Right ventricle myocardium superior (tissue), 1 donor: ENCODE measurements at regions of chr13 and their contacts with region 1.

Region 1: DNA sequence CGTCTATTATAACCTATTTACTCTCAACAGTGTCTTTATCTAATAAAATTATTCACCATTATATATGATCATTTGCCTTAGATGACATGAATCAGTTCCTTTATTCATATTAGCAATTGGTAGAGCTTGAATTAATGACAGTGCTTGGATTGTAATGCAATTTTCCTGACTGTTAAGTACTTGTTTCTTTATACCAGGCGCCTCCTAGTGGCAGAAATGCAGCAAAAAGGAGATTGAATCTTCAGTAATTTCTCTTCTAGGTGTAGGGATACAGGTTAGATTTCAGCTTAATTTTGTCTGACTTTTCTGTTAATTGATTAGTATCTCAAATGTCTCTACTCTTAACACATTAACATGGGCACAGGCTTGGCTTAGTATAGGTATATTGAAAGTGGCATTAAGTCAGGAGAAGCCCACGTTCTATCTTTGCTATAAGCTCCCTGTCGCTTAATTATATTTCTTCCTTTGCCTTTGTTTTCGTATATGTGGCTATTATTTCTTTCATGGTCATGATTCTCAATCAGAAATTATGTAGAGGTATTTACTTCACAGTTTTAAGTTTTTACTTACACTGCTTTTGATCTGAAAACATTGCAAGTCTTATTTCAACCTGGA is 9.1 kb upstream of the LHFPL6 start:
- DNase-seq: peak; percentile 48
- ATAC-seq: peak; percentile 76

Region 2: GRCh38 chr13:39051157-39051556 is 561.0 kb before region 1 on chr13:
- intact Hi-C with region 1: loop called (anchors 5 kb)
- DNase-seq: no peak
- ATAC-seq: no peak

Region 3: DNA sequence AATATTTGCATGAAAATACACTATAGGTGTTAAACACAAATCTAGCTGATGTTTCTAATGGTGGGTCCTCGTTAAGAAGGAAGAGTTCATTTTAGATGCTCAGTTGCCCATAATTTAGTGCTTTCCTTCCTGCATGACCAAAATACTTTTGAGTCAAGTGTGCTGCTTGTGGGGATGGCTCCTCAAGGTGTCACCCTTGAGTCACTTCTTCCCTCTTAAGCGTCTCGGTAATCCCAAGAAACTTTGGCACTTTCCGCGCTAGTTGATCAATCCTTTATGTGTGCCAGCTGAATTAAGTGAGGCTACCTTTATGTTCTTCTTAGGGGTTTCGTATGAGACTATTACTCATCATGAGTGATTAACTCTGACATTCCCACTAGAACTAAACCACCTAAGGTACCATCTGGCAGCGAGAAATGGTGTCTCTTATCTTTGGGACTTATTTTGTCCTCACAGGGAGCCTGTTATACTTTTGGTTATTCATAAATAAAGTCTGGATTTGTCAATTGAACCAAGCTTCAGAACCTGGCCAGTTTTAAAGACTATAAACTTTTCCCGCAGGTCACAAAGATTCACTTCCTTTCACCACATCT is 467.1 kb before region 1 on chr13:
- intact Hi-C with region 1: loop called (anchors 2 kb)
- DNase-seq: peak; percentile 45
- ATAC-seq: peak; percentile 80

Region 4: GRCh38 chr13:39321574-39321973 is 290.6 kb before region 1 on chr13:
- intact Hi-C with region 1: no loop called
- DNase-seq: peak; percentile 41
- ATAC-seq: peak; percentile 78